HEK293 (cell line): ENCODE measurements at regions of chr17 and their contacts with region 1.

Region 1: DNA sequence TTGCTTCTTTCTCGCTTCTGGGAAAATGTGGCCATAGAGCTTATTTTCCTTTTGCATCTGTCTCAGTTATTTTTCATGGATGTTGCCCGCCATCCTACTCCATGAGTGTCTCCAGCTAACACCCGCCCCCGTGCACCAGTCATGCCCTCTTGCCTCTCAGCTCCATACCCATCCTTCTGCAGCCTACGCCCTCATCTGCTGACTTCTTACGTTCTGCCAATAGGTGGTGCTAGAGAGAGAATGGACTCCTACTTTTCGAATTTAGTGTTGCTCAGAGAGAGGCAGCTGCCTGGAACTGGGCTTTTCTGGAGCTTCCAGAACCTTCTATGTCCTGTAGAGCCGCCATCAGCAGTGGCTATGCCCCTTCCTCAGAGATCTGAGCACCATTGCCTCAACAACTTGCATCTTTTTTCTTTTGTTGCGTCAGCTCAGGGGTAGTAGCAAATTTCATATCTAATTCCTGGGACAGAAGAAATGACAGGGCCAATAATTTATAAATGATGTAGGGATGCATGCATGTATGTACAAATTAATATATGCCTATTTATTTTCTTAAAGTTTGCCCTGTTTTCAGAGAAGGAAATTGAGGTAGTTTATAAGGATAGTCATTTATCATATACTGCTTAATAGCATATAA is 119.7 kb upstream of the MYOCD start:
- H3K4me3 ChIP-seq: no peak overlapping the region
- H3K27ac ChIP-seq: no peak overlapping the region
- H3K4me1 ChIP-seq: no peaks in the 10 kb centered on the region
- CTCF ChIP-seq: peak; percentile 35; the same call in 1 of the 2 replicates

Region 2: GRCh38 chr17:12342609-12343435 is 203.2 kb before region 1 on chr17:
- CTCF ChIA-PET with region 1: interaction called, 21 read pairs
- POLR2A ChIA-PET with region 1: no interaction called
- H3K4me3 ChIP-seq: no peak overlapping the region
- H3K27ac ChIP-seq: no peak overlapping the region
- H3K4me1 ChIP-seq: no peaks in the 10 kb centered on the region
- CTCF ChIP-seq: no peak

Region 3: DNA sequence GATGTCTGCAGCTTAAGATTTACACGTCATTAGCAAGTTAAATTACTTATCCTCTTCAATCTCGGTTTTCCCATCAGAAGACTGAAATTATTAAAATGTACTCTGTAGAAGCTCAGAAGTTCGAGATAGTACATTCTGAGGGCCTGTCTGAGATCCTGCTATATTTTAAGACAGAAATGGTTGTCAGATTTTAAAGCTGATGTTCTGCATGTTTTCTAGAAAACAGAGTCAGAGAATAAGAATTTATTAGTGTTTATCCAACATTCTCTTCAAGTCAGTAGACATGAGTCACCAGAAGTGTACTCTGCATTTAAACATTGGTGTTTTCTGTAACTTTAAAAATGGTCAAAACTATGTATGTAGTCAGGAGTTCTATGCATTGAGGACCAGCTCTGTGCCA is 35.5 kb before region 1 on chr17:
- CTCF ChIA-PET with region 1: interaction called, 11 read pairs
- POLR2A ChIA-PET with region 1: no interaction called
- H3K4me3 ChIP-seq: no peak overlapping the region
- H3K27ac ChIP-seq: no peak overlapping the region
- H3K4me1 ChIP-seq: no peaks in the 10 kb centered on the region
- CTCF ChIP-seq: no peak

Region 4: DNA sequence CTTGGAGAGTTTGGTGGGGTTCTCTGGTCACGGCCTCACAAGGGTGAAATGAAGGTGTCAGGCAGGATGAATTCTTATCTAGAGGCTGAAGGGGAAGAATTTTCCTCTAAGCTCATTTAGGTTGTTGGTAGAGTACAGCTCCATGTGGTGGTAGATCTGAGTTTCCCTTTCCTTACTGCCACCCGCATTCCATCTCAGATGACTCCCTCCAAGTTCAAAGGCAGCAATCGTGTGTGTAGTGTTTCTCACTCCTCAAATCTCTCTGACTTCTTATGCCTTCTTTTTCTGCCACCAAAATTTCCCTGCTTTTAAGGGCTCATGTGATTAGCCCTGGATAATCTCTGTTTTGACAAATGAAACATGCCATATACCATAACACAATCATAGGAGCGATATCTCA is 15.8 kb before region 1 on chr17:
- CTCF ChIA-PET with region 1: interaction called, 27 read pairs
- POLR2A ChIA-PET with region 1: no interaction called
- H3K4me3 ChIP-seq: no peak overlapping the region
- H3K27ac ChIP-seq: no peak overlapping the region
- H3K4me1 ChIP-seq: no peaks in the 10 kb centered on the region
- CTCF ChIP-seq: no peak

Region 5: GRCh38 chr17:12709063-12709462 is 163.1 kb after region 1 on chr17:
- CTCF ChIA-PET with region 1: no interaction called
- POLR2A ChIA-PET with region 1: no interaction called
- H3K4me3 ChIP-seq: no peak overlapping the region
- H3K27ac ChIP-seq: no peak overlapping the region
- H3K4me1 ChIP-seq: no peaks in the 10 kb centered on the region
- CTCF ChIP-seq: no peak